ENCODE measurements at regions of chr6 and their contacts with region 1.

Region 1: DNA sequence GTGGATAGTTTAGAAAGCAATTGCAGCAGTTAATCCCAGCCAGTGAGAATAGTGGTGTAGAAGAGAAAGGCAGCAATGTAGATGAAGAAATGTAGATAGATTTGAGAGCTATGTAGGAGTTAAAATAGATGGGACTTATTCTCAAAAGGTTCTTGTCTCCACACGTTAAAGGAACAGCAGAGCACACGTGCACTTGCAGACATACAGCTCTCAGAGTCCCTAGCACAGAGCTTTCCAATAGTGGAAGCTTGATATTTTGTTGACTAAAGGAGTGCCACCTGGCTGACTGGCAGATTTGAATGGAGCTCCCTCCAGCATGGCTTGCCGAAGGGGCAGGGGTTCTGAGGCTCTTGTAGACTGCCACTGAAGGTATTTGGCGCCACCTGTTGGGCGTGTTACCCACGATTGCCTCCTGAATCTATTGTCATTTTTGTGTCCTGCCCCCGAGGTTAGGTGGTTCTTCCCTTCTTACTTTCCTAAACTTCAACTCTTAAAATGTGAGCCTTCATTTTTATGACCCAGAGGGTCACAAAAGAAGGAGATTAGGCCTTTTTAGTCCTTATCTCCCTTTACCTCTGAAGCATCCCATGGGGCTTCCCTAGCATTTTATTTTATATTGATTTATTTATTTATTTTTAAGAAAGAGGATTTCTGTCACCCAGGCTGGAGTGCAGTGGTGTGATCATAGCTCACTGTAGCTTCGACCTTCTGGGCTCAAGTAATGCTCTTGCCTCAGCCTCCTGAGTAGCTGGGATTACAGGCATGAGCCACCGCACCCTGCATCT is 16.4 kb downstream of the BRD2 start:
- DNase-seq: peak; percentile 87
- H3K4me3 ChIP-seq: no peak overlapping the region
- H3K27ac ChIP-seq: no peak overlapping the region
- H3K4me1 ChIP-seq: no peaks in the 10 kb centered on the region
- H3K27me3 ChIP-seq: peaks cover 0 to 17% of the 10 kb centered on the region in 2 experiments
- CTCF ChIP-seq: peak; percentile 81 to 86
- POLR2A ChIP-seq: peak; percentile 26

Region 2: GRCh38 chr6:32838114-32838958 is 146.5 kb before region 1 on chr6 and contains the start of gene TAP2:
- CTCF ChIA-PET with region 1: interaction called, 37 read pairs
- POLR2A ChIA-PET with region 1: no interaction called
- dilution Hi-C with region 1: no loop called
- intact Hi-C with region 1: loop called (anchors 2 kb)
- DNase-seq: peak; percentile 94
- H3K4me3 ChIP-seq: peak within 1 kb of the TSS; percentile 30 to 89 (median 70)
- H3K27ac ChIP-seq: peak within 1 kb of the TSS; percentile 54
- H3K4me1 ChIP-seq: peaks cover 9% of the 10 kb centered on the region
- H3K27me3 ChIP-seq: no peaks in the 10 kb centered on the region
- CTCF ChIP-seq: peak; percentile 92 to 99
- POLR2A ChIP-seq: peak; percentile 64
- total RNA-seq, gene TAP2: 49.7 and 57.8 TPM in 2 replicates

Region 3: DNA sequence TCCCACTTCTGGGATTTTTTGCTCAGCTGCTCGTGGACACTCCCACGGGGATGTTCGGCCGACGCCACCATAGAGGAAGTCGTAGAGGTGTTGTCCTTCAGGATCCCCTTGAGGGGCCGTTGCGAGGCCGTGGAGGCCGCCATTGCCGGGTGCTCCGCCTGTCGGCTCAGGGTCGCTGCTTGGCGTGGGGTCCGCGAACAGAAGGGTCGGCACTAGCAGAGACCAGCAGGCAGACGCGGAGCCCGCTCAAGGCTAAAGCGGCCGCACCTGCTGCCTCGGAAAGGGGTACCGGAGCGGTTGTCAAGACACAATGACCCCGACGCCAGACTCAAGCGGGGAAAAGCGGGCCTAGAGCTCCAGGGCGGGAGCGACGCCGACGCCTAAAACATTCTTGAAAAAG is 105.1 kb before region 1 on chr6:
- CTCF ChIA-PET with region 1: interaction called, 192 read pairs
- POLR2A ChIA-PET with region 1: no interaction called
- dilution Hi-C with region 1: no loop called
- intact Hi-C with region 1: no loop called
- DNase-seq: no peak
- H3K4me3 ChIP-seq: no peak overlapping the region
- H3K27ac ChIP-seq: no peak overlapping the region
- H3K4me1 ChIP-seq: no peaks in the 10 kb centered on the region
- H3K27me3 ChIP-seq: peaks cover 43 to 68% of the 10 kb centered on the region in 2 experiments
- CTCF ChIP-seq: no peak
- POLR2A ChIP-seq: no peak

Region 4: GRCh38 chr6:32905078-32905477 is 79.7 kb before region 1 on chr6:
- CTCF ChIA-PET with region 1: interaction called, 19 read pairs
- POLR2A ChIA-PET with region 1: no interaction called
- dilution Hi-C with region 1: no loop called
- intact Hi-C with region 1: no loop called
- DNase-seq: no peak
- H3K4me3 ChIP-seq: no peak overlapping the region
- H3K27ac ChIP-seq: no peak overlapping the region
- H3K4me1 ChIP-seq: no peaks in the 10 kb centered on the region
- H3K27me3 ChIP-seq: no peaks in the 10 kb centered on the region
- CTCF ChIP-seq: no peak
- POLR2A ChIP-seq: no peak

Region 5: GRCh38 chr6:32940656-32941213 is 44.1 kb before region 1 on chr6 and contains the start of gene HLA-DMB:
- CTCF ChIA-PET with region 1: interaction called, 580 read pairs
- POLR2A ChIA-PET with region 1: interaction called, 9 read pairs
- dilution Hi-C with region 1: no loop called
- intact Hi-C with region 1: no loop called
- DNase-seq: peak; percentile 88
- H3K4me3 ChIP-seq: no peak within 1 kb of the TSS
- H3K27ac ChIP-seq: no peak within 1 kb of the TSS
- H3K4me1 ChIP-seq: peaks cover 7% of the 10 kb centered on the region
- H3K27me3 ChIP-seq: peaks cover 35 to 58% of the 10 kb centered on the region in 2 experiments
- CTCF ChIP-seq: no peak
- POLR2A ChIP-seq: no peak
- total RNA-seq, gene HLA-DMB: 0.39 TPM in 1 of 2 replicates, not detected in the other

Region 6: DNA sequence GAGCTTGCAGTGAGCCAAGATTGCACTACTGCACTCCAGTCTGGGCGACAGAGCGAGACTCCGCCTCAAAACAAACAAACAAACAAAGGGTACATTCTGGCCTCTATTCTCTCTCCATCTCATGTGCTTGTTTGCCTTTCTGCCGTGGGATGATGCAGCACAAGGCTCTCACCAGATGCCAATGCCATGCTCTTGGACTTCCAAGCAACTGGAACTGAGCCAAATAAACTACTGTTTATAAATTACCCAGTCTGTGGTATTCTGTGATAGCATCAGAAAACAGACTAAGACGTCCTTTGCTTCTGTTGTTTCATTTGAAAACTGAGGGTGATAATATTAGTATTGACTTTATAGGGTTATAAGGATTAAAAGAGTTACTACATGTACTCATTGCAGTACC is 20.0 kb before region 1 on chr6:
- CTCF ChIA-PET with region 1: interaction called, 181 read pairs
- POLR2A ChIA-PET with region 1: no interaction called
- dilution Hi-C with region 1: no loop called
- intact Hi-C with region 1: no loop called
- DNase-seq: no peak
- H3K4me3 ChIP-seq: no peak overlapping the region
- H3K27ac ChIP-seq: no peak overlapping the region
- H3K4me1 ChIP-seq: peaks cover 26% of the 10 kb centered on the region
- H3K27me3 ChIP-seq: no peaks in the 10 kb centered on the region
- CTCF ChIP-seq: no peak
- POLR2A ChIP-seq: no peak

Region 7: DNA sequence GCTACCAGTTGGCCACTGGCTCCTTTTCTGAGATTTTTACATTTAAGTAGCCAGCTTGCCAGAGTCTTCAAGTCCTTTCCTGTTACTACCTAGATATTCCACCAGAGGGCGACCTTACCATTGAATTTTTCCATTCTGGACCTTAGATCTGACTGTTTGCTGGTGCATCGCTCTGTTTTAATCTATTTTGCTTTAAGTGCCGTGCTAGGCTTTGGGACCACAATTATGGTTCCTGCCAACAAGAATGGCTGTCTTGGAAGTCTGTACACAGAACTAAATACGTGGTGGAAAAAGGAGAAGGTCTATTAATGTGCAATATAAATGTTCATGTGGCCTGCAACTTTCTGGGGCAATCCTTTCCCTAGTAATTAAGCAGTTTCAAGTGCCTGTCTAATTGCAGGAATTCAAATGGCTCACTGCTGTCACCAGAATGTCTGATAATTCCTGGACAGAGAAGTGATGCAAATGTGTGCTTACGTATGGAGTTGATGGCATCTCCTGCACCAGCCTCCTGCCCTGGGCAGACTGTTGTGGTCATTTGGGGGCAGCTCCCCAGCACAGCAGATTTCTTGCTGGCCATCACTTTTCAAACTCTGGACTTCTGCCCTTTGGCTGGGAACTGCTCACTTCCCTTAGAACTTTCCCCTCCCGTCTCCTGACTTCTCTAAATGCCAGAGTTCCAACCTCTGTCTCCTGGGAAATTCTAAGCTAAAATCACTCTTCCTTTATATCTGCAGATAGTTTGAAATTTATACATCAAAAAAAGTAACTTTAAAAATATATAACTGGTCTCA is 30.2 kb after region 1 on chr6:
- CTCF ChIA-PET with region 1: interaction called, 19 read pairs
- POLR2A ChIA-PET with region 1: no interaction called
- dilution Hi-C with region 1: no loop called
- intact Hi-C with region 1: no loop called
- DNase-seq: peak; percentile 85
- H3K4me3 ChIP-seq: no peak overlapping the region
- H3K27ac ChIP-seq: no peak overlapping the region
- H3K4me1 ChIP-seq: peaks cover 8% of the 10 kb centered on the region
- H3K27me3 ChIP-seq: peaks cover 23 to 30% of the 10 kb centered on the region in 2 experiments
- CTCF ChIP-seq: peak; percentile 56 to 57
- POLR2A ChIP-seq: no peak

Region 8: GRCh38 chr6:33095681-33096080 is 110.9 kb after region 1 on chr6:
- CTCF ChIA-PET with region 1: no interaction called
- POLR2A ChIA-PET with region 1: no interaction called
- dilution Hi-C with region 1: no loop called
- intact Hi-C with region 1: no loop called
- DNase-seq: no peak
- H3K4me3 ChIP-seq: no peak overlapping the region
- H3K27ac ChIP-seq: no peak overlapping the region
- H3K4me1 ChIP-seq: no peaks in the 10 kb centered on the region
- H3K27me3 ChIP-seq: peaks cover 20 to 25% of the 10 kb centered on the region in 2 experiments
- CTCF ChIP-seq: no peak
- POLR2A ChIP-seq: no peak

Region 9: DNA sequence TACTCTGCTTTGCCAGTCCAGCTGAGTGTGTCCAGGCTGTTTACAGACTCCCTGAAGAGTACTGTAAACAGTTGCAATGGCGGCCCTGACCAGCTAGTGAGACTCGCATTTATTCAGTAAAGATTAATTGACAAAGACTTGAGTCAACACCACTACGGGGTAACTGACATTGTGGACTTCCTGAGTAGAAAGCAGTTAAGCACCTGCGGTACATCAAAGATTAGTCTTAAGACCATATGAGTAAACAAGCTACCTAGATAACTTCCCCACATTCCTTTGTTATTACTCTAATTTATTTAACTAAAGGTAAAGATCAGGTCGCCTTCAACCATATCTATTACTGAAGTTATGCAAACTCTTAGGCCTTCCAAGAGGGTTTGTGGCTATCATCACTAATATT is 274.2 kb after region 1 on chr6:
- CTCF ChIA-PET with region 1: no interaction called
- POLR2A ChIA-PET with region 1: no interaction called
- dilution Hi-C with region 1: no loop called
- intact Hi-C with region 1: no loop called
- DNase-seq: no peak
- H3K4me3 ChIP-seq: no peak overlapping the region
- H3K27ac ChIP-seq: no peak overlapping the region
- H3K4me1 ChIP-seq: no peaks in the 10 kb centered on the region
- H3K27me3 ChIP-seq: no peaks in the 10 kb centered on the region
- CTCF ChIP-seq: no peak
- POLR2A ChIP-seq: no peak